GM12878 (cell line): ENCODE measurements at regions of chr13 and their contacts with region 1.

Region 1: DNA sequence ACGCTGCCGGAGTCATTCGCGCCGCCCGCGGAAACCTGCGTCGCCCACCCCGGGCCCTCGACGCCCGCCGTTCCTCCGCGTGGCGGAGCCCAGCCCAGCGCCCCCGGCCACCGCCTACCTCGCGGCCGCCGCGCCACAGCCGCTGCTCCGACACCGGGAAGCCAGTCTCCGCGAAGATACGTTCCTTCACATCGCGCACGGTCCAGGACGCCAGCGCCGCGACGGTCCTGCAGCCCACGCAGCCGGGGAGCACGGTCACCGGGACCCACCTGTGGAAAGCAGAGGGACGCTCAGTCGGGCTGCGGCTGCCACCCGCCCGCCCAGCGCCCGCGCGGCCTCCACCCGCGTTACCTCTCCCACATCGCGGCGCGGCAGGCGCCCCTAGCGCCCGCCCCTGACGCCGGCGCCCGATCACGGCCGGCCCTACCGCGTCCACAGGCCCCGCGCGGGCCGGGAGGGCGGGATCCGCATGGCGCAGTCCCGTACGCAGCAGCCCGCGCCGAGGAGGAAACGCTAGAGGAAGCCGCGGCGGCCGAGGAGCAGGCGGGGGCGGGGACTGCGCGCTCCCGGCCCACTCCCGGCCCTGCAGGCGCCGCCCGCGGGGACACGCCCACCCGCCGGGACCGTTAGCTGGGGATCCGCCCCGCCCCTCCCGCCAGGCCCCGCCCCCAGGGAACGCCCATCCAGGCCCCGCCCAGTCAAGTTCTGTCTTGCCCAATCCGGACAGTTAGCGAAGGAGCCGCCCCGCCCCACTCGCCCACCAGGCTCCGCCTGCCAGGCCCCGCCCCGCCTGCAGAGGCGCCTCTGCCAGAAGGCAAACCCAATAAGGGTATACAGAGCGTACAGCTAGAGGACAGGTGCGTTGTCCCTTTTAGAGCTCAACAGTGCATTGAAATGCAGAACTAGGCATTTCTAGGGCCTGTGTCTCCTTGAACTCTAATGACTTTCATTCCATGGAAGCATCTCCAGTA is 58.2 kb downstream of the SACS start:
- DNase-seq: peak; percentile 66
- ATAC-seq: peak; percentile 91
- H3K4me3 ChIP-seq: peak overlapping the region; percentile 80
- H3K27ac ChIP-seq: peak overlapping the region; percentile 75
- H3K4me1 ChIP-seq: peaks cover 37% of the 10 kb centered on the region
- H3K27me3 ChIP-seq: no peaks in the 10 kb centered on the region
- CTCF ChIP-seq: peak in 1 of 3 experiments; percentile 10; a peak in 1 of 6 replicates
- EP300 ChIP-seq: no peak
- POLR2A ChIP-seq: peak; percentile 87
- RAD21 ChIP-seq: no peak

Region 2: GRCh38 chr13:23460309-23460708 is 85.0 kb after region 1 on chr13:
- CTCF ChIA-PET with region 1: no interaction called
- POLR2A ChIA-PET with region 1: no interaction called
- RAD21 ChIA-PET with region 1: no interaction called
- SMC1A ChIA-PET with region 1: no interaction called
- in situ Hi-C with region 1: no loop called
- intact Hi-C with region 1: loop called (anchors 5 kb)
- DNase-seq: peak; percentile 71
- ATAC-seq: peak; percentile 82
- H3K4me3 ChIP-seq: no peak overlapping the region
- H3K27ac ChIP-seq: peak overlapping the region; percentile 51; the same call in 1 of the 2 replicates
- H3K4me1 ChIP-seq: peaks cover 34% of the 10 kb centered on the region
- H3K27me3 ChIP-seq: no peaks in the 10 kb centered on the region
- CTCF ChIP-seq: no peak
- EP300 ChIP-seq: 0 out of 4 replicates have a peak, but pooled peaks of 1 of the 2 experiments have one; percentile 22
- POLR2A ChIP-seq: no peak
- RAD21 ChIP-seq: no peak